ENCODE measurements at regions of chr19 and their contacts with region 1.

Region 1: DNA sequence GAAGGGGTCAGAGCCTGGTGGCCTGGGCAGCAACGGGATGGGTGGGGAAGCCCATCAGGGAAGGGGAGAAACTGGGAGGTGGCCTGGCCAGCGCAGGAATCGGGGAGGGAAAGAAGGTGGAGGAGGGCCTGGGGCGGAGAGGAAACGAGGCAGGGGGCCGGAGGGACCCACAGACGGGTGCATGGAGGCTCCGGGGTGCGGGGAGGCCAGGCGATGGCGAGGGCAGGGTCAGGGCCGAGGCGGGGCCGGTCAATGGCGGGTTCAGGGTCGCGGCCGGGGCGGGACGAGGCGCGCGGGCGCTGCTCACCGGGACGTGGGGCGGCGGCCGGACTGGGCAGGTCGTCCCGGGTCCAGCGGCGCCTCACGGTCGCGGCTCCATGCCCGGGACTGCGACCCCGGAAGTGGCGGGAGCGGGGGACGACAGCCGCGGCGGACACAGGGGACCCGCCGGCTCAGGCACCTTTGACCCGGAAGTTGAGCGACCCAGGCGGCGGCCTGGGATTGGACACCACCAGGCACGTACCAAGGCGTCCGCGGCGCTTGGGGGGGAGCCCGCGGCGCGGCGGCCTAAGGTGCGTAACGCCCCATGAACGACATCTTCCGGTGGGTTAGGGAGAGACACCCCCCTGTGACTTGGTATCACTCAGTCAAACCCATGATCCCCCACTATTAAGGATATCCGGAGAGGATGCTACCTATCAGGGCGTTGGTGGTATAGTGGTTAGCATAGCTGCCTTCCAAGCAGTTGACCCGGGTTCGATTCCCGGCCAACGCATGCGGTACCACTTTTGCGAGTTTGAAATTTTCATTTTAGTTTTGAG is at the start of gene DPP9:
- DNase-seq: peak; percentile 98
- ATAC-seq: peak; percentile 95
- H3K4me3 Mint-ChIP-seq: peak within 1 kb of the TSS; percentile 92
- H3K27ac Mint-ChIP-seq: peak within 1 kb of the TSS; percentile 93
- H3K4me1 Mint-ChIP-seq: peaks cover 26% of the 10 kb centered on the region
- H3K27me3 Mint-ChIP-seq: no peaks in the 10 kb centered on the region
- total RNA-seq, gene DPP9: 49.2 to 51.3 TPM

Region 2: DNA sequence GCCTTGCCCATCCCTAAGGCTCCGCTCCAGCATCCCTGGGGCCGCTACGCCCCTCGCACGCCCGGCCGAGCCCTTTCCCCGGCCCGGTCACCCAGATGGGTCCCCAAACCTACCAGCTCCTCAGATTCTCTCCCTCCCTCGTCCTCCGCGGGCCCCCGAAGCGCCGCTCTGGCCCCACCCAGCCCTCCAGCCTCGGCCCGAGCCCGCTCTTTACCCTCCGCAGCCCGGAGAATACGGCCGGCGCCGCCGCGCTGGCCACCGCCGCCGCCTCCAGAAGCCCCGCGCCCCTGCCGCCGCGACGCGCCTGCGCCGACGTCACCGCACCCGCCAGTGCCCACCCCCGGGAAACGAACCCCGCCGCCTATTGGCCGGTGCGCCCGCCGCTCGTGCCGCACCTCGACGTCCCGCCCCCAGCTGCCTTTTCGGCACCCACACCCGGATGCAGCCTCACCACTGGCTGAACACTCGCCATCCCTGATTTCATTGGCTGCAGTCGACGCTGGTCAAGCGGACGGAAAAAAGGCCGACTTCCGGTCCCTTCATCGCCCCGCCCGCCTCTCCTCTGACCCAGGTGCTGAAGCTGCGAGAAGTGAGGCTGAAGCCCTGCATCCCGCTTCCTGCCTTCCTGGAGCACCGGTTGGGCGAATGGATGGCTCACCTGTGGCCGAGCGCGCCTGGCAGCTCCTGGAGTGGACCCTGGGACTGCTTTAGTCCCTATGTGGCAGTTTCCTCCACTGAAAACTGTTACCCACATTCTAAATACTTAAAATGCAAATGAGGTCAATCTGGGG is 752.6 kb before region 1 on chr19 and contains the start of gene DAPK3:
- CTCF ChIA-PET with region 1: no interaction called
- POLR2A ChIA-PET with region 1: no interaction called
- intact Hi-C with region 1: loop called in 1 of 2 experiments (anchors 5 kb)
- DNase-seq: peak; percentile 97
- ATAC-seq: peak; percentile 95
- H3K4me3 Mint-ChIP-seq: peak within 1 kb of the TSS; percentile 83
- H3K27ac Mint-ChIP-seq: peak within 1 kb of the TSS; percentile 58
- H3K4me1 Mint-ChIP-seq: peaks cover 22% of the 10 kb centered on the region
- H3K27me3 Mint-ChIP-seq: no peaks in the 10 kb centered on the region
- total RNA-seq, gene DAPK3: 26.7 to 27.6 TPM

Region 3: GRCh38 chr19:4457654-4458395 is 265.8 kb before region 1 on chr19 and contains the start of gene UBXN6:
- CTCF ChIA-PET with region 1: no interaction called
- POLR2A ChIA-PET with region 1: no interaction called
- intact Hi-C with region 1: loop called in 1 of 2 experiments (anchors 1 kb)
- DNase-seq: peak; percentile 99
- ATAC-seq: peak; percentile 93
- H3K4me3 Mint-ChIP-seq: peak within 1 kb of the TSS; percentile 86
- H3K27ac Mint-ChIP-seq: peak within 1 kb of the TSS; percentile 86
- H3K4me1 Mint-ChIP-seq: peaks cover 19% of the 10 kb centered on the region
- H3K27me3 Mint-ChIP-seq: no peaks in the 10 kb centered on the region
- total RNA-seq, gene UBXN6: 32.9 to 38.4 TPM

Region 4: DNA sequence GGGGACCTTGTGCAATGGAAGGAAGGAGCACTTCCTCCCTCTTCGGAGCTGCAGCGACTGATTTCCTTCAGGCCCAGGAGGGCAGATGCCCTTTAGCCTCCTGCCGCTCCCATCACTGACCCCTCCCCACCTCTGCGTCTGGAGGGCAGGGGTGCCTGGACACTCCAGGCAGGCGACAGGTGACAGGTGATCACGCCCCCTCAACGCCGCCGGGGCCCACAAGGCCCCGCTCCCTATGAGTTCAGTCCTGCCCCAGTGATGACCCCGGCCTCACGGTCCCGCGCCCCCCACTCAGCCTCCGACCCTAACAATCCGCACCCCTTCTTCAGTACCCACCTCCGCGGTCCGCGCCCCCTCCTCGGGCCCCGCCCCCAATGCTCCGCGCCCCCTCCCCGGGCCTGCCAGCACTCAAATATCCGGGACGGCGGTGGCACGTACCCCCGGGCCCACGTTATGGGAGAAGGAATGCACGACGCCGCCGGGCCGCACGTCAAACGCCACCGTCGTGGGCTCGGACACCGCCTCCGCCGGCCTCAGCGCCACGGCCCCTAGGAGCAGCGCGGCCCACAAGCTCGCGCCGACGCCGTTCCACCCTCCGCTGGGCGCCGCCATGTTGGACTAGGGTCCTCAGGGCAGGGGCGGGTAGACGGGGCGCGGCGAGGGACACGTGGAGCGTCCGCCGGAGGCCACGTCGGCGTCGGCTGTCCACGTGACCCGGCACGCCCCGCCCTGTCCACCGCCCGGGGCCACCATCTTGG is 53.7 kb before region 1 on chr19 and contains the start of gene MYDGF:
- CTCF ChIA-PET with region 1: no interaction called
- POLR2A ChIA-PET with region 1: no interaction called
- intact Hi-C with region 1: loop called in 1 of 2 experiments (anchors 1 kb)
- DNase-seq: peak; percentile 97
- ATAC-seq: peak; percentile 99
- H3K4me3 Mint-ChIP-seq: peak within 1 kb of the TSS; percentile 85
- H3K27ac Mint-ChIP-seq: peak within 1 kb of the TSS; percentile 75
- H3K4me1 Mint-ChIP-seq: peaks cover 18% of the 10 kb centered on the region
- H3K27me3 Mint-ChIP-seq: no peaks in the 10 kb centered on the region
- total RNA-seq, gene MYDGF: 34.7 to 53.8 TPM

Region 5: GRCh38 chr19:4694209-4694987 is 29.2 kb before region 1 on chr19:
- CTCF ChIA-PET with region 1: no interaction called
- POLR2A ChIA-PET with region 1: no interaction called
- intact Hi-C with region 1: no loop called
- DNase-seq: no peak
- ATAC-seq: no peak
- H3K4me3 Mint-ChIP-seq: no peak overlapping the region
- H3K27ac Mint-ChIP-seq: peak overlapping the region; percentile 13
- H3K4me1 Mint-ChIP-seq: no peaks in the 10 kb centered on the region
- H3K27me3 Mint-ChIP-seq: no peaks in the 10 kb centered on the region

Region 6: DNA sequence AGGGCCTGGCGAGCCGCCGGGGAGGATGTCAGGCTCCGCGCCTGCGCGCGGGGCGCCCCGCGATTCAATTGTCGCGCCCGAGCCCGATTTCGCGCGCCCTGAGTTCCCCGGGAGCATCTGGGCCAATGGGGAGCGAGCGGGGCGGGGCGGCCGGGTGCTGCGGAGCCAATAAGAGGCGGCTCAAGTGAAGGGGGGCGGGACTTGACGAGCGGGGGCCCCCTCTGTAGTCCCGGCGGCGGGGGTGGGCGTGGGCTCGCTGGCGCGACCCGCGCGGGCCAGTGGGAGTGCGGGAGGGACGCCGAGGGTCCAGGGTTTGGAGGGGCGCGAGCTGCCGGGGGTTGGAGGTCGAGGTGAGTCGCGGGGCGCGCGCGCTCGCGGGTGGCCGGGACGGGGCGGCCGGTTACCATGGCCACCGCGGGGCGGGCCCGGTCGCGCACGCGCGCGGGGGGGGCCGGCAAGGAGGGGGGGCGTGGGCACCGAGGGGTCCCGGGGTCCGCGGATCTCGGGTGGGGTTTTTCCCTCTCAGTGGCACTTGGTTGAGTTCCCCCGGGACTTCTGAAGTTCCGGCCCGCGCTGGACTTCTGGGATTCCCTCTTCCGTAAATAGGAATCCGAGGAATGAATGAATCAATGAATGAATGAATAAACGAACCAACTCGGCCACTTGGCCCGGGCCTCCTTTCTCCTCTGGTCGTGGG is 186.5 kb after region 1 on chr19:
- CTCF ChIA-PET with region 1: no interaction called
- POLR2A ChIA-PET with region 1: no interaction called
- intact Hi-C with region 1: loop called in 1 of 2 experiments (anchors 1 kb)
- DNase-seq: peak; percentile 98
- ATAC-seq: peak; percentile 78
- H3K4me3 Mint-ChIP-seq: peak overlapping the region; percentile 83
- H3K27ac Mint-ChIP-seq: peak overlapping the region; percentile 90
- H3K4me1 Mint-ChIP-seq: peaks cover 42% of the 10 kb centered on the region
- H3K27me3 Mint-ChIP-seq: no peaks in the 10 kb centered on the region

Region 7: DNA sequence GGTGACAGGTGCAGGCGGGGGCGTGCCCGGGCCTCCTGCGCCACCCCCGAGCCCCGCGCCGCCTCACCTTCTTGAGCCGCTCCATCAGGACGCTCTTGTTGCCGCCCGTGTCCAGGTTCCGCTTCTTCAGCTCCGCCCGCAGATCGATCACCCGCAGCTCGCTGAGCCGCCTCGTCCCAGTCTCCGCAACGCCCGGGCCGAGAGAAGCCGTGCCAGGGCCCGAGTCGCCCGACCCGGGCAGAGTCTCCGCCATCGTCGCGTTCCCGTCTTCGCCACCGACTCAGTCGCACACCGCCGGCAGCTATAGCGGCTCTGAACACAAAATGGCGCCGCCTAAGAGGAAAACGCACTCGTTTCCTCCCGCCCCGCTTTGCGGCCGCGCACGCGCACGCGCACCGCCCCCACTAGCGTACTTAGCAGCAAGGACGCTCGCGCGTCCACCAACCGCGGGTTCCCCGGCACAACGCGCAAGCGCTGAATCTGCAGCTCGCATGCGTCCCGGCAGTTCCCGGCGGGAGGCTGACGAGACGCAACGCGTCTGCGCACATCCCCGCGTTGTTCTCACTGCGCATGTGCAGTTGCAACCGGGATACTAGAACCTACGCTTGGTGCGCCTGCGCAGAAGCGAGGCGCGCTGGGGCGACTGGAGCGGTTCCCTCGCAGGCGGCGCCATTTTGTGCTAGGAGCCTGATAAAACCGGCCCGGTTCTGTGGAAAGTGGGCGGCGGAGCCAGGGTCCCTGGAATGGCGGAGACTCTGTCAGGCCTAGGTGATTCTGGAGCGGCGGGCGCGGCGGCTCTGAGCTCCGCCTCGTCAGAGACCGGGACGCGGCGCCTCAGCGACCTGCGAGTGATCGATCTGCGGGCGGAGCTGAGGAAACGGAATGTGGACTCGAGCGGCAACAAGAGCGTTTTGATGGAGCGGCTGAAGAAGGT is 899.2 kb after region 1 on chr19 and contains the starts of genes SAFB and SAFB2:
- CTCF ChIA-PET with region 1: no interaction called
- POLR2A ChIA-PET with region 1: no interaction called
- intact Hi-C with region 1: loop called in 1 of 2 experiments (anchors 2 kb)
- DNase-seq: peak; percentile 100
- ATAC-seq: peak; percentile 92
- H3K4me3 Mint-ChIP-seq: peak within 1 kb of the TSS; percentile 100
- H3K27ac Mint-ChIP-seq: peak within 1 kb of the TSS; percentile 100
- H3K4me1 Mint-ChIP-seq: peaks cover 66% of the 10 kb centered on the region
- H3K27me3 Mint-ChIP-seq: no peaks in the 10 kb centered on the region
- total RNA-seq, gene SAFB: 100 to 118 TPM
- total RNA-seq, gene SAFB2: 65.0 to 78.6 TPM

Region 8: GRCh38 chr19:5680437-5681368 is 957.1 kb after region 1 on chr19 and contains the starts of genes HSD11B1L and MICOS13:
- CTCF ChIA-PET with region 1: no interaction called
- POLR2A ChIA-PET with region 1: no interaction called
- intact Hi-C with region 1: loop called in 1 of 2 experiments (anchors 1 kb)
- DNase-seq: peak; percentile 99
- ATAC-seq: peak; percentile 97
- H3K4me3 Mint-ChIP-seq: peak within 1 kb of the TSS; percentile 99
- H3K27ac Mint-ChIP-seq: peak within 1 kb of the TSS; percentile 94
- H3K4me1 Mint-ChIP-seq: peaks cover 20% of the 10 kb centered on the region
- H3K27me3 Mint-ChIP-seq: no peaks in the 10 kb centered on the region
- total RNA-seq, gene HSD11B1L: 2.0 to 3.2 TPM
- total RNA-seq, gene MICOS13: 50.9 to 52.1 TPM

Measured in activated CD4-positive, alpha-beta T cell treated with anti-CD3 and anti-CD28 coated beads for 36 hours (primary cell).